BJ (cell line): ENCODE measurements at regions of chr17 and their contacts with region 1.

Region 1: GRCh38 chr17:16521070-16521727 is 29.2 kb upstream of the LRRC75A start:
- DNase-seq: peak; percentile 45
- H3K4me3 ChIP-seq: no peak overlapping the region
- H3K27me3 ChIP-seq: peaks cover 5% of the 10 kb centered on the region
- CTCF ChIP-seq: peak; percentile 89

Region 2: DNA sequence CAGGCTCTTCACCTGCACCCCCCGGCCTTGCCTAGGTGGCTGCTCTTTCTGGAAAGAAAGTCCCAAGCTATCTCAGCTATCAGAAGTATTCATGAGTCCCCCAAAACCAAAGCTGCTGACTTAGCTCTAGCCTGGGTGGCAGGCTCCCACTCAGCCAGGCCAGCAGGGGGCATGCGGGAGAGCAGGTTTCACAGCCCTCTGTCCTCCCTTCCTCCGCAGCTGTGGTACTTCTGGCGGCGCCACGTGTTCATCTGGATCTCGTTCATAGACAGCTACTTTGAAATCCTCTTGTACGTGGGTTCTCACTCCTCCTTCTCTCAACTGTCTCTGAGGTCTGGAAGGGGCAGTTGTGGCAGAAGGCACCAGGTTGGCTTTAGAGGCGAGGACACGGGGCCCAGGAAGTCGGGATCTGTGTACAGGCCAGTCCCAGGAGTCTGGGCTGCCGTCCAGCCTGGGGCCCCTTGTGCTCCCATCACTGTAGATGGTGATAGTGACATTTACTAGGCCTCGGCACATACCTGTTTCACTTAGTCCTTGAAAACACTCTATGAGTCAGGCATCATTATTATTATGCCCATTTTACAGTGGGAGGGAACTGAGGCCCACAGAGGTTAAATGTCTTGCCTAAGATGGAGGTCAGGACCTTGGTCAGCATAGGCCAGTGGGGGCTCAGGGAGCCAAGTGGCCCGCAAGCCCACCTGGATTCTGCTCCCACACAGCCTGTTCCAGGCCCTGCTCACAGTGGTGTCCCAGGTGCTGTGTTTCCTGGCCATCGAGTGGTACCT is 92.9 kb before region 1 on chr17:
- CTCF ChIA-PET with region 1: interaction called, 16 read pairs
- POLR2A ChIA-PET with region 1: no interaction called
- DNase-seq: no peak
- H3K4me3 ChIP-seq: no peak overlapping the region
- H3K27me3 ChIP-seq: no peaks in the 10 kb centered on the region
- CTCF ChIP-seq: peak; percentile 83

Region 3: DNA sequence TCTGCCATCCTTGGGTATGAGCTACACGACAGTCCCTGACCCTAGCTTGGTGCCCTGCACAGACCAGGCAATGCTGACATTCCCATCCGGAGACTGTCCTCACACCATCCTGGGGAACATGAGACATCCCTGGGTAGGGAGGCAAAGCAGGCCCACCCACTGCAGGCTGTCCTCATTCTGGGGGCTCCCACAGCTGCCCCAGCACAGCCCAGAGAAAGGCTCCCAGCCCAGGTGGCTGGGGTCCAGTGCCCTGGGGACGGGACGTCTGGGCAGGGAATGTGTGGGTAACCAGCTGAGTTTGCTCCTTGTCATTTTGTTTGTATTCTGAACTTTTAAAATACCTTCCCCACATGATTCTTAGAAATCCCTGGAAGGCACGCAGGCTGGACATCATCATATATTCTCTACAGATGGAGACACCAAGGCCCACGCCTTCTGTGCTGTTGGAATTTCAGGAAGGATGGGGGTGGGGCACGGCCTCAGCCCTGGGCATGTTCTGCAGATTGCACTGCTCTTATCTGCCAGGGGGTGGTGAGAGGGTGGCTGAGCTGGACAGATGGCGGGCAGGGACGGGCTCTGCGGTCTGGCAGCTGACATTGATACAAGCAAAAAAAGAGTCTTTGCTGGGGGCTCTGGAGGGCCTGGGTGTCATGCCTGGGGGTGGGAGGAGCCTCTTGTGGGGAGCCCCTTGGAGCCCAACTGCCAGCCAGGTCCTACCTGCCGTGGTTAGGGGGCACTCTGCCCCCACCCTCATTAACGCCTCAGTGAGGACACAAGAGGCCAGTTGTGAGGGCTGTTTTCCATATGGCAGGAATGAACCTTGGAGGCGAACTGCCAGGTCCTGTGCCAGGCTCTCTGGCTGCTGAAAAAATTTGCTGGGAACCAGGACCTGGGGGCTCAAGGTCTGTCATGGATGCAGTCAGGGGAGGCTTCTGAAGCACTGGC is 57.6 kb before region 1 on chr17:
- CTCF ChIA-PET with region 1: interaction called, 36 read pairs
- POLR2A ChIA-PET with region 1: no interaction called
- DNase-seq: peak; percentile 51
- H3K4me3 ChIP-seq: no peak overlapping the region
- H3K27me3 ChIP-seq: no peaks in the 10 kb centered on the region
- CTCF ChIP-seq: peak; percentile 57

Region 4: DNA sequence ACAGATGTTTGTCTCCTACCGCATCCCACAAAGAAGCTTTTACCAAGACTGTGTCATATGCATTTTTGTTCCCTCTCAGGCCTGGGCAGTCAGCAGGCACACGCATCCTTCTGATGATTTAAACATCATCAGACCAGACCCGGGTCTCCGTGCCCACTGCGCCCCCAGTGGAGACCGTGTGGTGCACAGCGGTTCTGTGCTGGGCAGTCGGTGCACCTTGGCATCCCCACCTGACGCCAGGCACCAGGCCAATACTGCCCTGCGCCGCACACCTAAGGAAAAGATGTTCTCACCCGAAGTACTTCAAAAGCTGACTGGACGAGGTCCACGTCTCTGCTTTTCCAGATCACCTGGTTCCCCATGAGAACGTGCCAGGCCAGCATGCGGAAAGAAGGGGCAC is 695.6 kb after region 1 on chr17:
- CTCF ChIA-PET with region 1: no interaction called
- POLR2A ChIA-PET with region 1: no interaction called
- DNase-seq: no peak
- H3K4me3 ChIP-seq: no peak overlapping the region
- H3K27me3 ChIP-seq: no peaks in the 10 kb centered on the region
- CTCF ChIP-seq: no peak